Activated CD4-positive, alpha-beta memory T cell treated with anti-CD3 and anti-CD28 coated beads for 36 hours (primary cell): ENCODE measurements at regions of chr12 and their contacts with region 1.

Region 1: GRCh38 chr12:126588586-126589249 is 1523.5 kb downstream of the AACS start:
- DNase-seq: peak; percentile 46
- H3K4me3 Mint-ChIP-seq: no peak overlapping the region
- H3K27ac Mint-ChIP-seq: peak overlapping the region; percentile 61
- H3K4me1 Mint-ChIP-seq: peaks cover 20% of the 10 kb centered on the region
- H3K27me3 Mint-ChIP-seq: no peaks in the 10 kb centered on the region

Region 2: DNA sequence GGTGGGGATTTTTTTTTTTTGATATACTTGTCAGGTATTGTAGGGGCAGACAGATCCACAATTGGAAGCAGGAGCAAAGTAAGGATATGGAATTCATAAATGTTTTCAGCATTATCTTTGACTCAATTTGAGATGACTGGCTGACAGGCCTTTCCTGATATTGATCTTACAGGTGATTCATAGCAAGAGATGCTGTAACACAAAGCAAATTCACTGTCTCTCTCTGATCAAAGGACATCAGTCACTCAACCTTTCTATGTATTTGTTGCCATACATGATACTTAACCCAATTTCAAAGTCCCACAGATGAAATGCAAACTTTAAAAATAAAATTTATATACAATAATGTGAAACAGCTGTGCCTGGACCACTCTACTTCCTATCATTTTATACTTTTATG is 16.5 kb before region 1 on chr12:
- CTCF ChIA-PET with region 1: no interaction called
- POLR2A ChIA-PET with region 1: interaction called, 5 read pairs
- intact Hi-C with region 1: loop called (anchors 1 kb)
- DNase-seq: no peak
- H3K4me3 Mint-ChIP-seq: no peak overlapping the region
- H3K27ac Mint-ChIP-seq: no peak overlapping the region
- H3K4me1 Mint-ChIP-seq: no peaks in the 10 kb centered on the region
- H3K27me3 Mint-ChIP-seq: no peaks in the 10 kb centered on the region

Region 3: GRCh38 chr12:126708492-126708896 is 119.8 kb after region 1 on chr12:
- CTCF ChIA-PET with region 1: no interaction called
- POLR2A ChIA-PET with region 1: no interaction called
- intact Hi-C with region 1: loop called (anchors 1 kb)
- DNase-seq: peak; percentile 47
- H3K4me3 Mint-ChIP-seq: no peak overlapping the region
- H3K27ac Mint-ChIP-seq: peak overlapping the region; percentile 45
- H3K4me1 Mint-ChIP-seq: peaks cover 12% of the 10 kb centered on the region
- H3K27me3 Mint-ChIP-seq: peaks cover 1% of the 10 kb centered on the region